GM13977 (cell line): ENCODE measurements at regions of chr9 and their contacts with region 1.

Region 1: DNA sequence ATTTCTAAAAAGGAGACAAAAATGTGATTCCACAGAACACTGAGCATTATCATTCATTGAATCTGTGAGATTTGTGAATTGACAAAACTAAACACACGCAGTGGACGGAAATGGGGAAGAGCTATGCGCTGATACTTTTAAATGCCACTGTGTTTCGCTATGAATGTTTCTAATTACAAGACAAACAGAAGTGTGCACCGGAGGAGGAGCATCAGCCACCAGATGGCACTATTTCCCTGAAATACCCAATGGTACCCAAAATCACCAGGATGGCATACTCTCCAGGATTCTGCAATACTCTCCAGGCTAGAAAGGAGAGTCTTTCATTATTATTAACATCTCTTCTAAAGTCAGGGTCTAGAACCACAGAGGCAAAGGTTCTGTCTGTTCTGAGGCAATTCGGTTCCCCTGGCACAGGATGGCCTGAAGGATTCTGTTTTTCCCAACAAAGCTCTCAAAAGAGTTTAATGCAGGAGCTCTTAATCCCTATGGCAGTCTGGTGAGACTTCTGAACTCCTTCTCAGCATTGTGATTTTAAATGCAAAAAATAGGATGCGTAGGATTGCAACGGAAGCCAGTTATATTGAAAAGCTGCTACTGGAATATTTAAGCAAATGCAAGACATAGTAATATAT is 13.8 kb upstream of the PUM3 start:
- DNase-seq: peak; percentile 78
- CTCF ChIP-seq: peak; percentile 80

Region 2: GRCh38 chr9:3181049-3181953 is 323.6 kb after region 1 on chr9:
- in situ Hi-C with region 1: loop called (anchors 25 kb)
- DNase-seq: peak; percentile 57
- CTCF ChIP-seq: peak; percentile 47

Region 3: DNA sequence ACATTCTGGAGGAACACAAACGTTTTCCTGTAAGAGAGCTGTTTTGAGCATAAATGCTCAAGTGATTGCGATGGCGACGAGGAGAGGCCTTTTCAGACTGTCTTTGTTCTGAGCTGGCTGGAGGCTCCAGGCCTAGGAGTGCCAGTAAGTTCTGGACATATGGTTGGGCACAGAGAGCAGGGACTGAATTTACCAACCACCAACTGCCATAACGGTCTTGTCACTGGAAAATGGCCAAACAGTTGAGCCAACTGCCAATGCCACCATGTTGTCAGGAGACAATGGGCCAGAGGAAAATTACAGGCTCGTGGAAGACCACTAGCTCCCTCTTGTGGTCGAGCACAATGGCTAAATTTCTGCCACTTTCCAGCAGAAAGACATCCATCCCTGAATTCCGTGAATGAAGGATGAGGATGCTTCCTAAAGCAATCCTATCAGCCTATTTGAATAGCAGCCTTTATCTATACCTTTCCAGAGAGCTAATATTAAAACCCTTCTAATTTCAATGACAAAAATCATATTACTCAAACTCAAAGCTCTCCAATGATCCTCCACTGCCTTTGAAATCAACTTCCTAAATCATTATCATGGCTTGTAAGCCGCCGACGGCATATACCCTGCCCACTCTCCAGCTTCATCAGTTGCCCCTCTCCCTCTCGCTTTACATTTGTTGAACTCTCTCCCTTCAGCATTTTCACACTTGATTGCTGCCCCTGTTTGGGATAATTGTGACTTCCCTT is 1509.1 kb after region 1 on chr9:
- in situ Hi-C with region 1: loop called (anchors 25 kb)
- DNase-seq: peak; percentile 33
- CTCF ChIP-seq: peak; percentile 67